ENCODE measurements at regions of chr9 and their contacts with region 1.

Region 1: GRCh38 chr9:92035687-92036410 is 79.4 kb downstream of the SPTLC1 start:
- DNase-seq: no peak
- H3K4me3 ChIP-seq: no peak overlapping the region
- H3K27ac ChIP-seq: peak overlapping the region; percentile 57 to 81 (median 72)
- H3K4me1 ChIP-seq: peaks cover 0 to 49% (median 42%) of the 10 kb centered on the region in 4 donors
- H3K27me3 ChIP-seq: no peaks in the 10 kb centered on the region
- CTCF ChIP-seq: no peak
- EP300 ChIP-seq: no peak
- POLR2A ChIP-seq: no peak

Region 2: GRCh38 chr9:91775011-91775707 is 260.7 kb before region 1 on chr9:
- intact Hi-C with region 1: loop called (anchors 10 kb)
- DNase-seq: no peak
- H3K4me3 ChIP-seq: no peak overlapping the region
- H3K27ac ChIP-seq: peak overlapping the region in 1 of 4 donors; percentile 54
- H3K4me1 ChIP-seq: peaks cover 0 to 81% (median 72%) of the 10 kb centered on the region in 4 donors
- H3K27me3 ChIP-seq: no peaks in the 10 kb centered on the region
- CTCF ChIP-seq: peak; percentile 77 to 87 (median 78)
- EP300 ChIP-seq: no peak
- POLR2A ChIP-seq: no peak

Measured in esophagus muscularis mucosa (tissue), 4 donors.